Left colon (tissue), 2 donors: ENCODE measurements at regions of chr6 and their contacts with region 1.

Region 1: GRCh38 chr6:16770701-16771569 is 9.7 kb upstream of the ATXN1 start:
- DNase-seq: peak; percentile 80 to 83
- ATAC-seq: peak; percentile 94

Region 2: DNA sequence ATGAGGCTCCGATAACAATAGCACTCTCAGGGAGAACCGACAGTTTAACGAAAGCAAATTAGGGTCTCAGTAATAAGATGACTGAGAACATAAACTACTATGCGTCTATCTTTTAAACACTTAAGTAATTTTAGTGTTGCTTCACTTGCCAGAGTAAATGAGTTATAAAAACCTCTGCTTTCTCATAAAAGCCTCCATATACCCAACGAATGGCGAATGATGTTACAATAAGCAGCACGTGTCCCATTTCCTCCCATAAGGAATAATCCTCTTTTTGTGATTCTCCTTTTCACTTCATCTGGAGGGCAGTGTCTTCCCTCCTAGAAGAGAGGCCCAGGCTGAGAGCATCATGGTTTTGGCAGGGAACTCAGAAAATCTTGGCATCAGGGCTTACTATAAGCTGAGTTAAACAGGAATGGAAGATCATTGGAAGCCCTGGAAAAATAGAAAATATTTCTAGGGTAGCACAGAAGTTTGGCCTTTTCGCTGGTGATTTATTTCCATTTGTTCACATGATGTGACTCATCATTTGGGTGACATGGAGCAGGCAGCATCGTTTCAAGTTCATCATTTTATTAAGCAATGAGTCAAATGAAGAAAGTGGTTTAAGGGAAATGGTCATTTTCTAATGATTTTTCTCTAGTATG is 265.1 kb before region 1 on chr6:
- intact Hi-C with region 1: loop called in 1 of 2 experiments (anchors 5 kb)
- DNase-seq: no peak
- ATAC-seq: peak; percentile 35